ENCODE measurements at regions of chr11 and their contacts with region 1.

Region 1: DNA sequence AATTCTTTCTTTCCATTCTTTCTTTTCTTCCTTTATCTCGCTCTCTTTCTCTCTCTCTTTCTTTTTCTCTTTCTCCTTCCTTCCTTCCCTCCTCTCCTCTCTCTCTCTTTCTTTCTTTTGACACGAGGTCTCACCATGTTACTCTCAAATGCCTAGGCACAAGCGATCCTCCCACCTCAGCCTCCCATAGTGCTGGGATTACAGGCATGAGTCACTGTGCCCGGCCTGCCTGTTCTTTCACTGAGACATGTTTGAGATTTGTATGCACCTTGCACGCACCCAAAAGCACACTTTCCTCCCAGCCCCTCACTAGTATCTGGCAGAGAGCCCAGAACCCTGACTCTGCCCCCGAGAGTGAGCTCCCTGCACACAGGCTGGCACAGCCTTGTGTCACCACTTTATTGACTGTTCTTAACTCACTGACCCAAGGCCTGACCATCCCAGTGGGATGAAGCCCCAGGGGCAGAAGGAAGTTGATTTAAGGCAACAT is 56.8 kb downstream of the CD6 start:
- DNase-seq: peak in 1 of 5 donors; percentile 83
- H3K4me3 ChIP-seq: no peak overlapping the region
- H3K4me3 Mint-ChIP-seq: peak overlapping the region; percentile 74 to 91 (median 86)
- H3K27ac ChIP-seq: peak overlapping the region; percentile 66
- H3K27ac Mint-ChIP-seq: peak overlapping the region; percentile 98 to 100 (median 98)
- H3K4me1 ChIP-seq: peaks cover 59% of the 10 kb centered on the region
- H3K4me1 Mint-ChIP-seq: peaks cover 53 to 85% (median 67%) of the 10 kb centered on the region in 4 donors
- H3K27me3 ChIP-seq: no peaks in the 10 kb centered on the region
- H3K27me3 Mint-ChIP-seq: no peaks in the 10 kb centered on the region

Region 2: GRCh38 chr11:60913793-60914632 is 114.3 kb before region 1 on chr11 and contains the start of gene TMEM109:
- CTCF ChIA-PET with region 1: no interaction called
- POLR2A ChIA-PET with region 1: interaction called, 13 read pairs
- intact Hi-C with region 1: no loop called
- DNase-seq: peak; percentile 90 to 92 (median 91)
- H3K4me3 ChIP-seq: peak within 1 kb of the TSS; percentile 79 to 96
- H3K4me3 Mint-ChIP-seq: peak within 1 kb of the TSS; percentile 92 to 100 (median 98)
- H3K27ac ChIP-seq: peak within 1 kb of the TSS; percentile 96
- H3K27ac Mint-ChIP-seq: peak within 1 kb of the TSS; percentile 87 to 99 (median 98)
- H3K4me1 ChIP-seq: peaks cover 47% of the 10 kb centered on the region
- H3K4me1 Mint-ChIP-seq: peaks cover 31 to 65% (median 44%) of the 10 kb centered on the region in 4 donors
- H3K27me3 ChIP-seq: no peaks in the 10 kb centered on the region
- H3K27me3 Mint-ChIP-seq: no peaks in the 10 kb centered on the region
- total RNA-seq, gene TMEM109: 66.9 to 68.0 TPM

Region 3: DNA sequence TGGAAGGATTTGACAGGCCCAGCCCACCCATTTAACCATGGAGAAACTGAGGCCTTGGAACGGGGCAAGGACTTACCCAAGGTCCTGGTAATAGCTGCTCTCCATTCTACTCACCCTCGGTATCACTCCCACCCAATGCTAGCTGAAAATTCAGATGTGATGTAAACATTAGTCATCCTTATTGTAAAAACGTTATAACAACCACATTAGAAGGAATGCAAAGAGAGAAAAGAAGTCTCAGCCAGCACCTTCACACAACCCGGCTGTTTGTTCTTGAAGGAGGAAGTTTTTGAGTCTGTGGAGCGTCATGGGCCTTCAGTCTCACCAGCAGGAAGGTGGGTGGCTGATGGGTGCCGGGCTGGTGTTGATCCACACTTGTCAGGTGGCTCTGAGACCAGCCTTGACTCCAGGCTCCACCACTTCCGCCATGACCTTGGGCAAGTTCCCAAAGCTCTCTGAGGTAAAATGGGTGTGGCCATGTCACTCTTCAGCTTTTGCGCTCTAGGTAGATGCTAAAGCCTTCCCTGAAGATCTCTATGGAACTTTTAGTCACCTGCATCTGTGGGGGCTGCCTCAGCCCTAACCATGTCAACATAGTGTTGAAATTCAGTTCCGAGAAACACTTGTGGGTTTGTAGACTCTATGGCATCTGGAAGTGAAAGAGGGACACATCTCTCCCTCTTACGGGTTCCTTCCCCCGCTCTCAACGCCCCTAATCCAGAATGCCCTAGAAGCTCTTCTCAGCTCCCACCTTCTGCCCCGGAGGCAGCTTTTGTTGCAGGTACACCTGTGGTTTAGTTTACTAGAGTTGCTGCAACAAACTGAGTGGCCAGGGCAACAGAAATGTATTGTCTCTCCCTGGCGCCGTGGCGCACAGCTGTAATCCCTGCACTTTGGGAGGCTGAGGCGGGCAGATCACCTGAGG is 42.1 kb before region 1 on chr11:
- CTCF ChIA-PET with region 1: no interaction called
- POLR2A ChIA-PET with region 1: interaction called, 73 read pairs
- intact Hi-C with region 1: loop called (anchors 1 kb)
- DNase-seq: peak; percentile 92 to 99 (median 97)
- H3K4me3 ChIP-seq: peak overlapping the region in 1 of 2 donors; percentile 39
- H3K4me3 Mint-ChIP-seq: peak overlapping the region; percentile 61 to 87 (median 78)
- H3K27ac ChIP-seq: peak overlapping the region; percentile 92
- H3K27ac Mint-ChIP-seq: peak overlapping the region; percentile 88 to 100 (median 97)
- H3K4me1 ChIP-seq: peaks cover 94% of the 10 kb centered on the region
- H3K4me1 Mint-ChIP-seq: peaks cover 69 to 96% (median 86%) of the 10 kb centered on the region in 4 donors
- H3K27me3 ChIP-seq: no peaks in the 10 kb centered on the region
- H3K27me3 Mint-ChIP-seq: no peaks in the 10 kb centered on the region

Region 4: DNA sequence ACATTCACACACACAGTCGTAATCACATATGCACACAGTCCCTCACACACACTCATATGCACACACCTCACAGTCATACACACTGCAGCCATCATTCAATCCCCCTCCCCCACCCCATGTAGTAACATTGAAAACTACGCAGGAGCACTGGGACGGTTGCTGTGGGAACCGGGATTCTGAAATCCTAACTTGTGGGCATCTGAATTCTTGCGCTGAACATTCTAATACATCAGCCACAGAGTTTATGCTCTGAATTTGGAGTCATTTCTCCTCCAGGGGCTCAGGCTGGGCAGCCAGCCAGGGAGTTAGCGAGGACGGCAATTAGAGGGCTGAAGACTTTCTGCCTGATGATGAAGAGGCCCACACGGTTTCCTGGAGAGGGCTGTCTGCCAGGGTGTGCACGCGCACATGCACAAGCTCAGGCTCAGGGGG is 24.1 kb before region 1 on chr11:
- CTCF ChIA-PET with region 1: no interaction called
- POLR2A ChIA-PET with region 1: interaction called, 74 read pairs
- intact Hi-C with region 1: loop called (anchors 2 kb)
- DNase-seq: peak in 3 of 5 donors; percentile 47 to 76 (median 60)
- H3K4me3 ChIP-seq: peak overlapping the region; percentile 5 to 14
- H3K4me3 Mint-ChIP-seq: peak overlapping the region; percentile 63 to 87 (median 83)
- H3K27ac ChIP-seq: peak overlapping the region; percentile 54
- H3K27ac Mint-ChIP-seq: peak overlapping the region; percentile 89 to 97 (median 95)
- H3K4me1 ChIP-seq: peaks cover 93% of the 10 kb centered on the region
- H3K4me1 Mint-ChIP-seq: peaks cover 51 to 90% (median 66%) of the 10 kb centered on the region in 4 donors
- H3K27me3 ChIP-seq: no peaks in the 10 kb centered on the region
- H3K27me3 Mint-ChIP-seq: no peaks in the 10 kb centered on the region

Region 5: GRCh38 chr11:61061081-61061826 is 32.9 kb after region 1 on chr11:
- CTCF ChIA-PET with region 1: interaction called, 3 read pairs
- POLR2A ChIA-PET with region 1: interaction called, 38 read pairs
- intact Hi-C with region 1: loop called (anchors 1 kb)
- DNase-seq: peak; percentile 60 to 97 (median 65)
- H3K4me3 ChIP-seq: peak overlapping the region; percentile 17 to 48
- H3K4me3 Mint-ChIP-seq: peak overlapping the region; percentile 72 to 93 (median 86)
- H3K27ac ChIP-seq: peak overlapping the region; percentile 69
- H3K27ac Mint-ChIP-seq: peak overlapping the region; percentile 94 to 99 (median 97)
- H3K4me1 ChIP-seq: peaks cover 75% of the 10 kb centered on the region
- H3K4me1 Mint-ChIP-seq: peaks cover 59 to 91% (median 66%) of the 10 kb centered on the region in 4 donors
- H3K27me3 ChIP-seq: no peaks in the 10 kb centered on the region
- H3K27me3 Mint-ChIP-seq: no peaks in the 10 kb centered on the region

Region 6: DNA sequence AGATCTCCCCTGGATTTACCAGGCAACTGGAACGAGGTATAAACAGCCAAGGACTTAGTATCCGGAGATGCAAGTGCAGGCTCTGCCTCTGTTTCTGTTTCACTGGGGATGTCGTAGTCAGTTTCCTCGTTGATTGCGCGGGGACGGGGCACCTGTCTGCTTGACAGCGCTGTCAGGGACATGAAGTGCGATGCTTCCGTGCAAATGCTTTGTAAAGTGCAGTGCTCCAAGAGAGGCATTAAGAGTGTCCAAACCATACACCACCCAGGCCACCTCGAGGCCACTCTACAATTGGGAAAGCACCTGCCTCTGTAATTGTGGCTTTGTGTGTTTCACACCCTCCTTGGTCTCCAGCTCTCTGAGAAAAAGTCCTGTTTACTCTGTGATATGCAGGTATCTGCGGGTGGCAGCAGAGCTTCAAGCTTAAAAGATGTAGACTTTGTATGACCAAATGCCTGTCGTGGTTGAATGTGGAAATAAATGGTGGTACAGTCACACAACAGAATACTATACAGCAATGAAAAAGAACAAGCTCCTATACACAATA is 55.4 kb after region 1 on chr11:
- CTCF ChIA-PET with region 1: interaction called, 5 read pairs
- POLR2A ChIA-PET with region 1: interaction called, 253 read pairs
- intact Hi-C with region 1: loop called (anchors 2 kb)
- DNase-seq: peak; percentile 80 to 91 (median 82)
- H3K4me3 ChIP-seq: peak overlapping the region in 1 of 2 donors; percentile 19
- H3K4me3 Mint-ChIP-seq: peak overlapping the region; percentile 75 to 90 (median 86)
- H3K27ac ChIP-seq: peak overlapping the region; percentile 91
- H3K27ac Mint-ChIP-seq: peak overlapping the region; percentile 94 to 100 (median 99)
- H3K4me1 ChIP-seq: peaks cover 55% of the 10 kb centered on the region
- H3K4me1 Mint-ChIP-seq: peaks cover 42 to 65% (median 50%) of the 10 kb centered on the region in 4 donors
- H3K27me3 ChIP-seq: no peaks in the 10 kb centered on the region
- H3K27me3 Mint-ChIP-seq: no peaks in the 10 kb centered on the region

Region 7: GRCh38 chr11:61102667-61103571 is 74.6 kb after region 1 on chr11:
- CTCF ChIA-PET with region 1: no interaction called
- POLR2A ChIA-PET with region 1: interaction called, 21 read pairs
- intact Hi-C with region 1: loop called (anchors 5 kb)
- DNase-seq: peak; percentile 34 to 63 (median 47)
- H3K4me3 ChIP-seq: peak overlapping the region; percentile 99 to 100
- H3K4me3 Mint-ChIP-seq: no peak overlapping the region
- H3K27ac ChIP-seq: peak overlapping the region; percentile 100
- H3K27ac Mint-ChIP-seq: no peak overlapping the region
- H3K4me1 ChIP-seq: peaks cover 64% of the 10 kb centered on the region
- H3K4me1 Mint-ChIP-seq: peaks cover 0 to 47% (median 28%) of the 10 kb centered on the region in 4 donors
- H3K27me3 ChIP-seq: no peaks in the 10 kb centered on the region
- H3K27me3 Mint-ChIP-seq: no peaks in the 10 kb centered on the region

Region 8: DNA sequence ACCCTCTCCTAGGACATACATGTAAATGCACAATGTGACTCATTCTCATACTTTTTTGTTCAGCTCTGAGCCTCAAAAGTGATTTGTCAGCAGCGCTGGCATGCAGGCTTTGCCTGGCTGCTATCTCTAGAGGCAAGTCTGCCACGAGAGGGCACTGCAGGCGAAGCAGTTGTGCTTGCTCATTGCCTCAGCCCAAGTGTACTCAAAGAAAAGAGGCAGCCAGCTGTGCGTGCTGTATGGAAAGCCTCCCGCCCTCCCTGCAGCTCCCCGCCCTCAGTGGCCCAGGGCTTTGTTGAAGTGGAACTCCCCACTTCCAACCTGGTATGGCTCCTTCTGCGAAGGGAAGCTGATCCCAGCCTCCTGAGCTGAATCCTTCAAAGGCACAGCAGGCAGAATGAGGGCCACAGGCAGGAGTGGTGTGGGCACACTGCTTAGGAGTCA is 417.9 kb after region 1 on chr11:
- CTCF ChIA-PET with region 1: no interaction called
- POLR2A ChIA-PET with region 1: no interaction called
- intact Hi-C with region 1: no loop called
- DNase-seq: peak; percentile 33 to 68 (median 50)
- H3K4me3 ChIP-seq: no peak overlapping the region
- H3K4me3 Mint-ChIP-seq: no peak overlapping the region
- H3K27ac ChIP-seq: no peak overlapping the region
- H3K27ac Mint-ChIP-seq: peak overlapping the region in 2 of 7 donors; percentile 61 to 70
- H3K4me1 ChIP-seq: no peaks in the 10 kb centered on the region
- H3K4me1 Mint-ChIP-seq: peaks cover 11 to 18% (median 13%) of the 10 kb centered on the region in 4 donors
- H3K27me3 ChIP-seq: no peaks in the 10 kb centered on the region
- H3K27me3 Mint-ChIP-seq: no peaks in the 10 kb centered on the region

Measured in CD4-positive, alpha-beta memory T cell (primary cell).